ENCODE measurements at regions of chr15 and their contacts with region 1.

Region 1: GRCh38 chr15:94168247-94168646 is 63.1 kb upstream of the MCTP2 start:
- DNase-seq: no peak
- ATAC-seq: no peak
- H3K4me3 ChIP-seq: no peak overlapping the region
- H3K27ac ChIP-seq: no peak overlapping the region
- H3K4me1 ChIP-seq: no peaks in the 10 kb centered on the region
- H3K27me3 ChIP-seq: no peaks in the 10 kb centered on the region
- CTCF ChIP-seq: peak in 2 of 7 experiments; percentile 10 to 13
- POLR2A ChIP-seq: no peak

Region 2: GRCh38 chr15:94306700-94307650 is 138.7 kb after region 1 on chr15:
- intact Hi-C with region 1: no loop called
- DNase-seq: no peak
- ATAC-seq: no peak
- H3K4me3 ChIP-seq: no peak overlapping the region
- H3K27ac ChIP-seq: no peak overlapping the region
- H3K4me1 ChIP-seq: no peaks in the 10 kb centered on the region
- H3K27me3 ChIP-seq: no peaks in the 10 kb centered on the region
- CTCF ChIP-seq: no peak
- POLR2A ChIP-seq: no peak

Region 3: DNA sequence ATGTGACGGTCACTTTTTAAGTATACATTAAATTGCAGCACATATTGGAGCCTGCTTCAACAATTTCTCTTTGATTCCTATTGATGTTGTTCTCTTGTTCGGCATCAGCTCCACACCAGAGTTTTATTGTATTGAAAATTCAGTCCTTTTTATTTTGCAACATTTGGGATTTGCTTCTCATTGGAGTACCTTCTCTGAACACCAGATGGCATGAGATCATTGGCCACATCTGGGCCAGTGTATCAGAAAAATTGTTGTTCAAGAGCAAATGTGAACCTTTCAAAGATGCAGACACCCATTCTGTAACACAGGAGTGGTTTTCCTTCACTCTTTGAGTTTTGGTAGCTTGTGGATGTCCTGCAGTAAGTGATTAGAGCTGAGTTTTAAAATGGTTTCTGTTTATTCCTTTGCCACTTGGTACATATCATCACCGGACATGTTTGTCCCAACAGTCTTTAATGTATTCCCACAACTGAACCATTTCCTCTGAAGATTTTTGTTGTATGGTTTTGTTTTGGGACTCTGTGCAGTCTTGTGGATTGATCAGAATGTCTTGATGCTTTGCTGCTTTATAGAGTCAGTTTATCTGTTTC is 159.2 kb after region 1 on chr15:
- intact Hi-C with region 1: loop called (anchors 5 kb)
- DNase-seq: peak in 1 of 4 donors; percentile 8
- ATAC-seq: no peak
- H3K4me3 ChIP-seq: no peak overlapping the region
- H3K27ac ChIP-seq: no peak overlapping the region
- H3K4me1 ChIP-seq: peaks cover 5% of the 10 kb centered on the region
- H3K27me3 ChIP-seq: no peaks in the 10 kb centered on the region
- CTCF ChIP-seq: peak; percentile 5 to 57 (median 47)
- POLR2A ChIP-seq: no peak

Measured in body of pancreas (tissue), 4 donors.